ENCODE measurements at regions of chr9 and their contacts with region 1.

Region 1: DNA sequence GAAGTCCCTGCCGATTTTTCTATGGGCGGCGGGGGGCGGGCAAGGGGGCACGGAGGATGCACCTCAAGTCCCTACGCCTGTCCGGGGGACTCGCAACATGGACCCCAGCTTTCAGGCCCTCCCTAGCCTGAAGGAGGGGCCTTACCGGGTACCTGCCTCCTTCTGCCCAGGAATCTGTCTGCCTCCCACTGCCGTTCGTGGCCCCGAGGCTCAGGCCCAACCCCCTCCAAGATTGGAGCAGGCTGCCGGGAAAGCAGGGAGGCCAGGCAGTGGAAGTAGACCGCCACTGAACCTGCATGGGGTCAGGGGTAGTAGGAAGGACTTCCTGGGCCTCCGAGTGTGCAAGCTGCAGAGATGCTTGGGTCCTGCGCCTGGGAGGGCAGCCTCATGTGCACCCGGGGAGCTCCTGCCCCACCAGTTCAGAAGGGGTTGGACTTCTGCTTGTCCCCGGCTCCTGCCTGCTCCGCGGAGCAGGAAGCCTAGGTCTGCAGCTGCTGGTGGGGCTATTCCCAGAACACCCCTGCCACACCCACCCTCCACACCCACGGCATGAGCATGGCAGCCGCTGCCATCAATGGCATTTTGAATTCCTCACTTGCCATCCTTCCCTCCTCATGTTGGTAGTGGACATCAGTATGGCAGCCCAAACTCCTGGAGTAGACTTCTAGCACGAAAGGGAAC is 1312.7 kb upstream of the ACO1 start:
- DNase-seq: no peak
- H3K4me3 ChIP-seq: no peak overlapping the region
- H3K27ac ChIP-seq: no peak overlapping the region
- H3K4me1 ChIP-seq: peaks cover 0 to 14% (median 0%) of the 10 kb centered on the region in 4 donors
- H3K27me3 ChIP-seq: no peaks in the 10 kb centered on the region
- CTCF ChIP-seq: no peak
- EP300 ChIP-seq: no peak
- POLR2A ChIP-seq: no peak

Region 2: GRCh38 chr9:30967484-30967883 is 104.3 kb before region 1 on chr9:
- in situ Hi-C with region 1: loop called in 1 of 4 experiments (anchors 25 kb)
- intact Hi-C with region 1: no loop called
- DNase-seq: no peak
- H3K4me3 ChIP-seq: no peak overlapping the region
- H3K27ac ChIP-seq: no peak overlapping the region
- H3K4me1 ChIP-seq: no peaks in the 10 kb centered on the region
- H3K27me3 ChIP-seq: no peaks in the 10 kb centered on the region
- CTCF ChIP-seq: no peak
- EP300 ChIP-seq: no peak
- POLR2A ChIP-seq: no peak

Measured in transverse colon (tissue), 4 donors.